WTC11 (cell line): ENCODE measurements at regions of chr14 and their contacts with region 1.

Region 1: GRCh38 chr14:22929104-22929847 is at the start of gene PRMT5:
- DNase-seq: peak; percentile 97
- ATAC-seq: peak; percentile 96
- H3K4me3 Mint-ChIP-seq: no peak within 1 kb of the TSS
- H3K27ac Mint-ChIP-seq: no peak within 1 kb of the TSS; the same call in 1 of the 2 replicates
- H3K4me1 Mint-ChIP-seq: peaks cover 7% of the 10 kb centered on the region
- H3K27me3 Mint-ChIP-seq: no peaks in the 10 kb centered on the region
- CTCF ChIP-seq: no peak
- total RNA-seq, gene PRMT5: 119 to 124 TPM (median 123 TPM) in 3 replicates

Region 2: DNA sequence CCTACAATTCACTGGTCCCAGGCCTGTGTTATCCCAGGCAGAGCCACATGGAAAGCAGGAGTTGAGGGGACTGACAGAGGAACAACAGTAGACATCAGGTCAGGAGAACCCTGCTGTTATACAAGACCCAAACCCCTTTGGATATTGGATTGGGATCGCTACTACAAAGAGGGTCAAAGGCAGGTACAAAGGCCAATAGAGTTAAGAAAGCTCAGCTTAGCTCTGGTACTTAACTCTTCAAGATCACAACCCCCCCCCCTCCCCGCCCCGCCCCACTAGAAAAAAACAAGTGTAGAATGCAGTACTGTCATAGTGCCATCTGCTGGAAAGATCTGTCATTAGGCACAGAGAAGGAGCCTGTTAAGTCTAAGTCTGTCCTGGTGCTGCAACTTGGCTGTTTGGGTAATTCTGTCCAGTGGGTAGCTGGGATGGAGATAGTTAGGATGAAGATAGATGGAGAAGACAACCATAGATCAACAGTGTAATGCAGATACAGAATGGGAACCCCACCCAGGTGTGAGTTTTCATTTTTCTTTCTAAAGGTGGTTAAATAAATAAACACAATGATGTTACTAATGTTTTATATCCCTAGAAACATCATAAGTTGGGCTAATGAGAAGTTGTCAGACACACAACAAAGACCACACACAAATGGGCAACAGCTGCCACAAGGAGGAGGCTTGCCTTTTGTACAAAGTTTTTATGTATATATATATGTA is 29.0 kb before region 1 on chr14:
- CTCF ChIA-PET with region 1: interaction called, 14 read pairs
- POLR2A ChIA-PET with region 1: interaction called, 3 read pairs
- DNase-seq: peak; percentile 28
- ATAC-seq: peak; percentile 79
- H3K4me3 Mint-ChIP-seq: no peak overlapping the region
- H3K27ac Mint-ChIP-seq: no peak overlapping the region
- H3K4me1 Mint-ChIP-seq: peaks cover 8% of the 10 kb centered on the region
- H3K27me3 Mint-ChIP-seq: peaks cover 49% of the 10 kb centered on the region
- CTCF ChIP-seq: 0 out of 2 replicates have a peak, but pooled peaks have one; percentile 27

Region 3: GRCh38 chr14:22939684-22940083 is 10.4 kb after region 1 on chr14:
- CTCF ChIA-PET with region 1: interaction called, 41 read pairs
- POLR2A ChIA-PET with region 1: no interaction called
- DNase-seq: no peak
- ATAC-seq: no peak
- H3K4me3 Mint-ChIP-seq: no peak overlapping the region
- H3K27ac Mint-ChIP-seq: no peak overlapping the region; the same call in 1 of the 2 replicates
- H3K4me1 Mint-ChIP-seq: 0 out of 2 replicates have a peak, but pooled peaks cover 2% of the 10 kb centered on the region
- H3K27me3 Mint-ChIP-seq: no peaks in the 10 kb centered on the region
- CTCF ChIP-seq: no peak

Region 4: GRCh38 chr14:22973217-22974032 is 44.1 kb after region 1 on chr14:
- CTCF ChIA-PET with region 1: interaction called, 18 read pairs
- POLR2A ChIA-PET with region 1: interaction called, 7 read pairs
- DNase-seq: peak; percentile 50
- ATAC-seq: peak; percentile 16
- H3K4me3 Mint-ChIP-seq: no peak overlapping the region
- H3K27ac Mint-ChIP-seq: peak overlapping the region; percentile 17
- H3K4me1 Mint-ChIP-seq: peaks cover 27% of the 10 kb centered on the region
- H3K27me3 Mint-ChIP-seq: no peaks in the 10 kb centered on the region
- CTCF ChIP-seq: peak; percentile 51

Region 5: GRCh38 chr14:23034483-23035302 is 105.4 kb after region 1 on chr14 and contains the start of gene PSMB5:
- CTCF ChIA-PET with region 1: no interaction called
- POLR2A ChIA-PET with region 1: no interaction called
- DNase-seq: peak; percentile 84
- ATAC-seq: peak; percentile 94
- H3K4me3 Mint-ChIP-seq: peak within 1 kb of the TSS; percentile 96
- H3K27ac Mint-ChIP-seq: peak within 1 kb of the TSS; percentile 100
- H3K4me1 Mint-ChIP-seq: peaks cover 14% of the 10 kb centered on the region
- H3K27me3 Mint-ChIP-seq: no peaks in the 10 kb centered on the region
- CTCF ChIP-seq: no peak
- total RNA-seq, gene PSMB5: 200 to 224 TPM (median 203 TPM) in 3 replicates

Region 6: DNA sequence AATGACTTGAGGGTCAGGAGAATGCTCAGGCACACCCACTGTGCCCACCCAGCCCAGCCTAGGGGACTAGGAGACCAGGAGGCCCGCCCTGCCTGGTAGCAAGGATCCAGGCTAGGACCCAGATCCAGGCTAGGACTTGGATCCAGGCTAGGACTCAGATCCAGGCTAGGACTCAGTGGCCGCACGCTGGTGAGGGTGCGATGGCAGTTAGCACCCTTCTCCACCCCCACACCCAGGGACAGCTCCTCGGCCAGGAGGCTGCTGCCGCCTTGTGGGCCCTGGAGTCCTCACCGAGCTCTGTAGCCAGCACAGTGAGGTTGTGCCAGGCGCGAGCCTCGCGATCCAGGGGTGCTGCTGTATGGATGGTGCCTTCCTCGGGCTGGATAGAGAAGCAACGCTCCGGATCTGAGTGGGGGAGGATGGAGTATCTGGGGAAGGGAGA is 122.9 kb after region 1 on chr14:
- CTCF ChIA-PET with region 1: interaction called, 21 read pairs
- POLR2A ChIA-PET with region 1: interaction called, 7 read pairs
- DNase-seq: peak; percentile 68
- ATAC-seq: peak; percentile 55
- H3K4me3 Mint-ChIP-seq: no peak overlapping the region
- H3K27ac Mint-ChIP-seq: no peak overlapping the region
- H3K4me1 Mint-ChIP-seq: peaks cover 15% of the 10 kb centered on the region
- H3K27me3 Mint-ChIP-seq: peaks cover 5% of the 10 kb centered on the region; the same call in 1 of the 2 replicates
- CTCF ChIP-seq: no peak